B cell (primary cell): ENCODE measurements at regions of chr20 and their contacts with region 1.

Region 1: GRCh38 chr20:19815553-19815991 is 57.5 kb downstream of the RIN2 start:
- DNase-seq: peak; percentile 69
- ATAC-seq: peak; percentile 87
- H3K4me3 ChIP-seq: peak overlapping the region in 2 of 5 experiments; percentile 16 to 24
- H3K4me3 Mint-ChIP-seq: peak overlapping the region; percentile 65
- H3K27ac ChIP-seq: no peak overlapping the region
- H3K27ac Mint-ChIP-seq: peak overlapping the region; percentile 75
- H3K4me1 ChIP-seq: peaks cover 46 to 48% of the 10 kb centered on the region in 2 donors
- H3K4me1 Mint-ChIP-seq: peaks cover 67% of the 10 kb centered on the region
- H3K27me3 ChIP-seq: no peaks in the 10 kb centered on the region
- H3K27me3 Mint-ChIP-seq: no peaks in the 10 kb centered on the region
- CTCF ChIP-seq: no peak

Region 2: DNA sequence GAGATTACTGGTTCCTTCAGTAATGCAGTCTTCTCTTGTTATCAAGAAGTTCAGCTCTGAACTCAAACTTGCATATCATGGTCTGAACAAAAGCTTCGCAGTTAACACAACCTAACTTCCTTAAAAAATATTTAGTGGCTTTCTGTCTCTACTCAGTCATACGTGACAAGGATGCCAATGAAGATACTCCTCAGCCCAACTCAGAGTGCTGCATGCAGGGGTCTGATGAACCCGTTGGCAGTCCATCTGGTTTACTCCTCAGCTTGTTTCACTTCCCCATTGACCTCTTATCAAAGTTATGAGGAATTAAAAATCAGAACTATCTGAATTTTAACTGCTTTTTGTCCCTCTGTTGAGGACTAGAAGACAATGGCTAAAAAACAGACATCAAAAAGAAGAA is 114.1 kb before region 1 on chr20:
- CTCF ChIA-PET with region 1: interaction called, 4 read pairs
- POLR2A ChIA-PET with region 1: no interaction called
- intact Hi-C with region 1: loop called (anchors 1 kb)
- DNase-seq: peak; percentile 81
- ATAC-seq: peak; percentile 85
- H3K4me3 ChIP-seq: peak overlapping the region in 1 of 5 experiments; percentile 2
- H3K4me3 Mint-ChIP-seq: peak overlapping the region; percentile 33
- H3K27ac ChIP-seq: peak overlapping the region in 1 of 2 donors; percentile 44
- H3K27ac Mint-ChIP-seq: peak overlapping the region; percentile 59
- H3K4me1 ChIP-seq: peaks cover 52 to 53% of the 10 kb centered on the region in 2 donors
- H3K4me1 Mint-ChIP-seq: peaks cover 44% of the 10 kb centered on the region
- H3K27me3 ChIP-seq: no peaks in the 10 kb centered on the region
- H3K27me3 Mint-ChIP-seq: no peaks in the 10 kb centered on the region
- CTCF ChIP-seq: no peak

Region 3: GRCh38 chr20:19750907-19751606 is 64.5 kb before region 1 on chr20:
- CTCF ChIA-PET with region 1: no interaction called
- POLR2A ChIA-PET with region 1: interaction called, 10 read pairs
- intact Hi-C with region 1: no loop called
- DNase-seq: peak; percentile 25
- ATAC-seq: peak; percentile 45
- H3K4me3 ChIP-seq: no peak overlapping the region
- H3K4me3 Mint-ChIP-seq: no peak overlapping the region
- H3K27ac ChIP-seq: no peak overlapping the region
- H3K27ac Mint-ChIP-seq: no peak overlapping the region
- H3K4me1 ChIP-seq: peaks cover 9 to 10% of the 10 kb centered on the region in 2 donors
- H3K4me1 Mint-ChIP-seq: peaks cover 13% of the 10 kb centered on the region
- H3K27me3 ChIP-seq: no peaks in the 10 kb centered on the region
- H3K27me3 Mint-ChIP-seq: peaks cover 17% of the 10 kb centered on the region
- CTCF ChIP-seq: no peak

Region 4: DNA sequence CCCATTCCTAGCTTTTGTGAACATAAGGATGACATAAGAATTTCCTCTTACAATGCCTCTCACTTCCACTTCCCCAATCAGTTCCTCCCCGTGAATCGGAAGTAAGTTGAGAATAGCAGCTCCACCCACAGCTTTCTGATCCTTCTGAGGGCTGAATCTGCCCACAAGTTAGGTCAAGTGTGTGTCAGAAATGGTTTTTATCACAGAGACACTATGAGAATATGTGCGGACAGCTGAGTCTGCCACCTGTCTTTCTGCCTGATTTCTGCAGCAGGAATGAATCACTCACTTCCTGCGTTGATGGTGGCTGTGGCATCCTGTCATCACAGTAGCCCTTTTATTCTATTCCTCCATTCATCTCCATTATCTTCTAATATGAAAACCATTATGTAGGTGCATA is 12.7 kb after region 1 on chr20:
- CTCF ChIA-PET with region 1: interaction called, 27 read pairs
- POLR2A ChIA-PET with region 1: interaction called, 4 read pairs
- intact Hi-C with region 1: loop called (anchors 1 kb)
- DNase-seq: peak; percentile 84
- ATAC-seq: peak; percentile 91
- H3K4me3 ChIP-seq: no peak overlapping the region
- H3K4me3 Mint-ChIP-seq: peak overlapping the region; percentile 12
- H3K27ac ChIP-seq: peak overlapping the region; percentile 44 to 48
- H3K27ac Mint-ChIP-seq: peak overlapping the region; percentile 66
- H3K4me1 ChIP-seq: peaks cover 58 to 63% of the 10 kb centered on the region in 2 donors
- H3K4me1 Mint-ChIP-seq: peaks cover 62% of the 10 kb centered on the region
- H3K27me3 ChIP-seq: no peaks in the 10 kb centered on the region
- H3K27me3 Mint-ChIP-seq: peaks cover under 1% of the 10 kb centered on the region
- CTCF ChIP-seq: peak; percentile 50

Region 5: DNA sequence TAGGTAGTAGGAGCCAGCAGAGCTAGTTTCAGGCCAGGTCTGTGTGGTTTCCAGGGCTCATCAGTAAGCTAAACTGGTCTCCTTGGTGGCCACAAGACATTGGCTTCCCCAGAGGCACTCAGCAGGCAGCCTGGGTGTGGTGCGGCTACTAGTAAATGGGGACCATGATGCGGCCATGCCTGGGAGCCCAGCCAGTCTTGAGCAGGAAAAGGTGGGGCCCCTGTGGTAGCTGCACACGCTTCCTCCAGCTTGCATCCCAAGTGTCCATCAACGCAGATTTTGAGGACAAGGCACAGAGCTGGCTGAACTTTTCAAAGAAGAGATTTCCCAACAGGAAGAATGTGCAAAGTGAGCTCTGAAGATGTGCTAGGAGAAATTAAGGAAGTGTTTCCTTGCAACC is 94.2 kb after region 1 on chr20:
- CTCF ChIA-PET with region 1: no interaction called
- POLR2A ChIA-PET with region 1: no interaction called
- intact Hi-C with region 1: loop called (anchors 10 kb)
- DNase-seq: no peak
- ATAC-seq: no peak
- H3K4me3 ChIP-seq: no peak overlapping the region
- H3K4me3 Mint-ChIP-seq: no peak overlapping the region
- H3K27ac ChIP-seq: no peak overlapping the region
- H3K27ac Mint-ChIP-seq: no peak overlapping the region
- H3K4me1 ChIP-seq: peaks cover 1 to 6% of the 10 kb centered on the region in 2 donors
- H3K4me1 Mint-ChIP-seq: peaks cover 23% of the 10 kb centered on the region
- H3K27me3 ChIP-seq: no peaks in the 10 kb centered on the region
- H3K27me3 Mint-ChIP-seq: no peaks in the 10 kb centered on the region
- CTCF ChIP-seq: no peak

Region 6: GRCh38 chr20:19940988-19941460 is 125.5 kb after region 1 on chr20:
- CTCF ChIA-PET with region 1: no interaction called
- POLR2A ChIA-PET with region 1: no interaction called
- intact Hi-C with region 1: no loop called
- DNase-seq: no peak
- ATAC-seq: no peak
- H3K4me3 ChIP-seq: no peak overlapping the region
- H3K4me3 Mint-ChIP-seq: no peak overlapping the region
- H3K27ac ChIP-seq: no peak overlapping the region
- H3K27ac Mint-ChIP-seq: no peak overlapping the region
- H3K4me1 ChIP-seq: peaks cover 24 to 26% of the 10 kb centered on the region in 2 donors
- H3K4me1 Mint-ChIP-seq: peaks cover 37% of the 10 kb centered on the region
- H3K27me3 ChIP-seq: no peaks in the 10 kb centered on the region
- H3K27me3 Mint-ChIP-seq: no peaks in the 10 kb centered on the region
- CTCF ChIP-seq: no peak

Region 7: DNA sequence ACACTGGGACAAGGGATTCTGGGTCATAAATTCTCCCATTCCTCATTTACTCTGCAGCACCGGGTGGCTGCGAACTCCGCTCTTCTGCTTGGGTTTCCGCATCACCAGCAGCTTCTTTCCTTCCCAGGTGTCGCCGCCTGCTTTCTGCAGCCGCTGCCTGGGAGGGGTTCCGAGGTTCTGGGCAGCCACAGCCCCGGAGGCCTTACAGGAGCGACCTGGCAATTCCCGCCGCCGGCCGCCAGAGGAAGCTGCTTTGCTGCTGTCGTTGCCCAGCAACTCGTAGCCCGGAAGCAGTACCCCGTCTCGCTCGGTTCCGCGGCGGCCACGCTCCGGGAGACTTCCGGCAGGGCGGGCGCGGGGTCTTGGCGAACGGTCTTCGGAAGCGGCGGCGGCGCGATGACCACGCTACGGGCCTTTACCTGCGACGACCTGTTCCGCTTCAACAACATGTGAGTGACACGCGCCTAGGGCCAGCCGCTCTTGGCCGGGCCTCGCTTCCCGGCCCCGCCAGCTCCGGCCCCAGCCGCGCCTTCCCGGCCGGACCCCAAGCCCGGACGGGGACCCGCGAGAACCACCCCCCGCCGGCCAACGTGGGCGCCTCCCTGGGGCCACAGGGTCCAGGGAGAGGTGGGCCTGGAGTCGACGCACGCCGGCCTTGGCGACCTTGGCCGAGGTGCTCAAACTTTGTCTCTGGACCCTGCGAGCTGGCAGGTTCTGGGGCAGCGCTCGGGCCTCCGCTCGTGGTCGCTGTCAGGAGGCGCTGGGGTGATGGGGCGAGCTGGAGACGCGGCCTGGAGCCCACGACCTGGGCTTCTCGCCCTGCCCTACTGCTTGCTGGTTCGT is 201.7 kb after region 1 on chr20 and contains the start of gene NAA20:
- CTCF ChIA-PET with region 1: no interaction called
- POLR2A ChIA-PET with region 1: no interaction called
- intact Hi-C with region 1: loop called (anchors 10 kb)
- DNase-seq: peak; percentile 91
- ATAC-seq: peak; percentile 98
- H3K4me3 ChIP-seq: peak within 1 kb of the TSS; percentile 41 to 91 (median 83)
- H3K4me3 Mint-ChIP-seq: peak within 1 kb of the TSS; percentile 94
- H3K27ac ChIP-seq: peak within 1 kb of the TSS; percentile 1 to 86
- H3K27ac Mint-ChIP-seq: peak within 1 kb of the TSS; percentile 94
- H3K4me1 ChIP-seq: peaks cover 12 to 27% of the 10 kb centered on the region in 2 donors
- H3K4me1 Mint-ChIP-seq: peaks cover 42% of the 10 kb centered on the region
- H3K27me3 ChIP-seq: no peaks in the 10 kb centered on the region
- H3K27me3 Mint-ChIP-seq: no peaks in the 10 kb centered on the region
- CTCF ChIP-seq: peak; percentile 73
- total RNA-seq, gene NAA20: 25.5 and 27.1 TPM in 2 replicates